A673 (cell line): ENCODE measurements at regions of chr10 and their contacts with region 1.

Region 1: DNA sequence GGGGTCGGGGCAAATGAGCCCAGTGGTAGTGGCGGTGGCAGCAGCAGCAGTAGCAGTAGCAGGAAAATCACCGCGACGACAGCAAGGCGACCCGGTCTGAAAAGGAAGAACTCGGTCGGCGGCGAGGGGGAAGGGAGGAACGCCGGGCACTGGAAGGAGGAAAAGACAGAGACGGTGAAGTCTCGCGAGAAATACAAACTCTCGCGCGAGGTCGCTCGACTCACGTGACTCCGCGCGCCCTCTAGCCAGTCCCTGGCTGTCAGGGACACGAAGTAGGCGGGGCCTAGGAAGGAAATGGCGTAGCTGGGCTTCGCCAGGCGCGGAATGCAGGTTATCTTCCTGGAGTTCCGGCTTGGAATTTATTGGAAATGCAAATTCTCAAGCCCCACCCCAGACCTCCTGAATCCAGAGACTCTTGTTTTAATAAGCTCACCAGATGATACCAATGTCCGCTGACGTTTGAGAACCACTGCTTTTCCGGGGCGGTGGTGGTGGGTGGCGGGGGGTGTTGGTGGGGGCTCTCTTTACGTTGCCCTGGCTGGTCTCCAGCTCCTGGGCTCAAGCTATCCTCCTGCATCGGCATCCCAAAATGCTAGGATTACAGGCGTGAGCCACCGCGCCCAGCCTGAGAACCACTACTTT is at the start of gene SMNDC1:
- DNase-seq: peak; percentile 99
- H3K4me3 ChIP-seq: peak within 1 kb of the TSS; percentile 81
- H3K27ac ChIP-seq: peak within 1 kb of the TSS; percentile 95
- H3K4me1 ChIP-seq: peaks cover 68% of the 10 kb centered on the region
- H3K27me3 ChIP-seq: no peaks in the 10 kb centered on the region
- CTCF ChIP-seq: no peak
- total RNA-seq, gene SMNDC1: 53.1 and 57.8 TPM in 2 replicates

Region 2: DNA sequence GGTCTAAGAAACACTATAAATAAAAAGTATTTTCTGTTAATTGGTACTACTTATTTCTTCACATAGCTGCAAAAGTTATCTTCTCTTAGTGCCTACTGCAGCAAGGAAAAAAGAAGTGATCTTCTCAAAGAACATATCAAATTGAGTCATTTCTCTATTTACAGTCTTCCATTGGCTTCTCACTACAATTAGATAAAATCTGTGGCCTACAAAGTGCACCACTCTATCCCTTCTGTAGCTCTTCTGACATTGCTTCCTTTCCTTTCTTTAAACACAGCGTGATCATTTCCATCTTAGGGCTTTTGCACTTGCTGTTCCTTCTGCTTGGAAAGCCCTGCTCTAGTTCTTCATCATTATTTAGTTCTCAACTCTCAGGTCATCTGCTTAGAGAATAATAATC is 52.8 kb before region 1 on chr10:
- CTCF ChIA-PET with region 1: no interaction called
- POLR2A ChIA-PET with region 1: no interaction called
- intact Hi-C with region 1: no loop called
- DNase-seq: peak; percentile 25
- H3K4me3 ChIP-seq: no peak overlapping the region
- H3K27ac ChIP-seq: peak overlapping the region; percentile 9
- H3K4me1 ChIP-seq: peaks cover 11% of the 10 kb centered on the region
- H3K27me3 ChIP-seq: no peaks in the 10 kb centered on the region
- CTCF ChIP-seq: no peak

Region 3: GRCh38 chr10:110446954-110447608 is 142.2 kb after region 1 on chr10:
- CTCF ChIA-PET with region 1: no interaction called
- POLR2A ChIA-PET with region 1: no interaction called
- intact Hi-C with region 1: no loop called
- DNase-seq: peak; percentile 60
- H3K4me3 ChIP-seq: no peak overlapping the region
- H3K27ac ChIP-seq: no peak overlapping the region
- H3K4me1 ChIP-seq: peaks cover 2% of the 10 kb centered on the region
- H3K27me3 ChIP-seq: no peaks in the 10 kb centered on the region
- CTCF ChIP-seq: no peak

Region 4: DNA sequence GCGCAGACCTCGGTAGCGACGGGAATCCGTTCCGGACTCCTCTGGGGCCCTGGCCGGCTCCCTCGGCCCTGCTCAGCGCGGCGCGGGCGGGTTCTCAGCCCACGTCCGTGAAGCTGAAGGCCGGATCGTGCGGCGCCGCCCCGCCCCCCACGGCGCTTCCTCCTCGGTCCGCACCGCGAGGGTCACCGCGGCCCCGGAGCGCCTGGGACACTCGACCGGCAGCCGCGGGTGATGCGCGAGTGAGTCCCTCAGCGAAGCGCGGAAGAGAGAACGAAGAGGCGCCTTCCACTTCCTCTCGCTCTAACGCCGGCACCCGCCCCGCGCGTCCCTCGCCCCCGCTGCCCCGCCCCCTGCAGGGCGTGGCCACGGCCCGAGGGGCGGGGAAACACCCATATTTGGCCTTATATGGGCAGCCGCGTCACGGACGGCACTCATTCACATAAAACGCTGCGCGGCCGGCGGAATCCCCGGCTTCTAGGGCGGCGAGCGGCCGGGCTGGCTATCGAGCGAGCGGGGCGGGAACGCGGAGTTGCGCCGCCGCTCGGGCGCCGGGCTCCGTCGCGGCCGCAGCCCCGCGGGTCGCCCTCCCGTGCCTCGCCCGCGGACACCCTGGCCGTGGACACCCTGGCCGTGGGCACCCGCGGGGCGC is 192.7 kb after region 1 on chr10 and contains the start of gene DUSP5:
- CTCF ChIA-PET with region 1: no interaction called
- POLR2A ChIA-PET with region 1: no interaction called
- intact Hi-C with region 1: loop called (anchors 5 kb)
- DNase-seq: peak; percentile 98
- H3K4me3 ChIP-seq: peak within 1 kb of the TSS; percentile 69
- H3K27ac ChIP-seq: peak within 1 kb of the TSS; percentile 89
- H3K4me1 ChIP-seq: peaks cover 35% of the 10 kb centered on the region
- H3K27me3 ChIP-seq: no peaks in the 10 kb centered on the region
- CTCF ChIP-seq: no peak
- total RNA-seq, gene DUSP5: 23.2 and 29.3 TPM in 2 replicates

Region 5: DNA sequence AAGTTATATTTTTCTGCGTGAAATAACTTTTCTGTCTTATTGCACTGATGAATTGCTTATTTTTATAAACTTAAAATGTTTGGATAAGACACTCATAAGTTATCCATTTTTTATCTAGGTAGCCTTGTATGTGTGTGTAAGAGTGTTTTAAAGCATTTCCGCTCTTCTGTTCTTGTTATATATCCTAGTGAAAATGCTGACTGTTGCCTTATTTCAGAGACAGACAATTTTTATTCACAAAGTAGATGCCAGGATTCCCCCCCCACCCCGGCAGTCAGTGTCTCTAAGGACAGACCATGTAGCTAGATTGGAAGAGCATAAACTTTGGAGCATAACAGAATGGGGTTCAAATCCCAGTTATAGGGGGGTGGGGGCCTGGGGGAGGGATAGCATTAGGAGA is 264.2 kb after region 1 on chr10:
- CTCF ChIA-PET with region 1: interaction called, 10 read pairs
- POLR2A ChIA-PET with region 1: no interaction called
- intact Hi-C with region 1: no loop called
- DNase-seq: no peak
- H3K4me3 ChIP-seq: peak overlapping the region; percentile 98
- H3K27ac ChIP-seq: no peak overlapping the region
- H3K4me1 ChIP-seq: peaks cover 41% of the 10 kb centered on the region
- H3K27me3 ChIP-seq: no peaks in the 10 kb centered on the region
- CTCF ChIP-seq: no peak

Region 6: GRCh38 chr10:110871298-110872084 is 566.6 kb after region 1 on chr10 and contains the start of gene PDCD4:
- CTCF ChIA-PET with region 1: no interaction called
- POLR2A ChIA-PET with region 1: no interaction called
- intact Hi-C with region 1: loop called (anchors 5 kb)
- DNase-seq: peak; percentile 99
- H3K4me3 ChIP-seq: peak within 1 kb of the TSS; percentile 87
- H3K27ac ChIP-seq: peak within 1 kb of the TSS; percentile 89
- H3K4me1 ChIP-seq: peaks cover 3% of the 10 kb centered on the region
- H3K27me3 ChIP-seq: no peaks in the 10 kb centered on the region
- CTCF ChIP-seq: no peak
- total RNA-seq, gene PDCD4: 17.3 and 23.7 TPM in 2 replicates

Region 7: DNA sequence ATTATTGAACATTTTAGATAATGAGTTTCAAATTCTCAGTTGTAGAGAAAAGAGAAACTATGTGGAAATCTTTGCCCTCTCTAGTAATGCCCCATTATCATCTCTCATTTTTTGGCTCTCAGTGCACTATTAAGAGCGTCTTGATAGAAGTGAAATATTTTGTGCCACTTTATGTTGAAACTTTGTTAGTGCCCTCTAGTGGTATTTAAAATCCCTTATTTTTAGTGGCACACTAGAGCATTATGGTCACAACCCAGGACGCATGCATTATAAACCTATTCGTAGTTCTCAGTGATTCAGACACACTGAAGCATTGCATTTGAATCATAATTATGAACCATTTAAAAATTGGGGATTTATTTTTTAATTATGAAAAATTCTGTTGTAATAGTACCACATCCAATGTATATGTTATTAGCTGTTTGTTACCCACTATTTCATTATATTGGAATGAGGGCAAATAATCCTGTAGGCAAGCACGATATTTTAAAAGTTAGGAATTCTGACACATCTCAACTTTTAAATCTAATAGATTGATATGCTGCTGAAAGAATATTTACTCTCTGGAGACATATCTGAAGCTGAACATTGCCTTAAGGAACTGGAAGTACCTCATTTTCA is 588.8 kb after region 1 on chr10:
- CTCF ChIA-PET with region 1: no interaction called
- POLR2A ChIA-PET with region 1: no interaction called
- intact Hi-C with region 1: loop called (anchors 5 kb)
- DNase-seq: peak; percentile 76
- H3K4me3 ChIP-seq: no peak overlapping the region
- H3K27ac ChIP-seq: no peak overlapping the region
- H3K4me1 ChIP-seq: peaks cover 4% of the 10 kb centered on the region
- H3K27me3 ChIP-seq: no peaks in the 10 kb centered on the region
- CTCF ChIP-seq: peak; percentile 67

Region 8: DNA sequence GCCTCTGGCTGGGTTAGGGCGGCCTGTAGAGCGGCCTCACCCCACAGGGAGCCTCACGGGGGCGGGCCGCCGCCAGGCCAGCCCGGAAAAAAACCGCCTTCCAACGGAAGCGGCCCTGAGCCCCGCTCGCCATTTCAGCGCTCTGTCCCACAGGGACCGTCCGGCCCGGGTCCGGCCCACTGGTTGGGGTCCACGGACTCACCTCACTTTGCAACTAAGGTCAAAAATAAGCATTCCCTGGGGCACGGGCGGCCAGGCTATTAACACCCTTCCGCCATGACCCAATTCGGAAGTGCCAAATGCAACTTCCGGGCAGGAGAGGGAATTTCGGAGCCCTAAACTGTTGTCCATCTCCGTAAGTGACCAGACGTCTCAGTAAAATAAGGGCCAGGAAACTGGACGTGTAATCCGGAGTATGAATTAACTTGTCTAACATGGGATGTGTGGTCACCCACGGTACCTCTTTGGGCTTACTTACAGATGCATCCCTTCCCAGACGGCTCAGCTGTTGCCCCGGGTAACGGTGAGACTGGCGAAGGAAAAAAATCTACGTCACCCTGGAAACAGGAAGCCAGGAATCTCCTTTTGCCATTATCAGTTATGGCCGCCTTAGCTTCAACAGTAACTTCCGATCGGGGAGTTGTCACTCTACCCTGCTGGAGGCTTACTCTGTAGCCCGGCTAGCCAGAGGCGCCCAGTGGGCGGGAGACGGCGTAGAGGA is 613.9 kb after region 1 on chr10 and contains the start of gene BBIP1:
- CTCF ChIA-PET with region 1: no interaction called
- POLR2A ChIA-PET with region 1: no interaction called
- intact Hi-C with region 1: loop called (anchors 10 kb)
- DNase-seq: peak; percentile 100
- H3K4me3 ChIP-seq: peak within 1 kb of the TSS; percentile 71
- H3K27ac ChIP-seq: peak within 1 kb of the TSS; percentile 94
- H3K4me1 ChIP-seq: peaks cover 44% of the 10 kb centered on the region
- H3K27me3 ChIP-seq: no peaks in the 10 kb centered on the region
- CTCF ChIP-seq: no peak
- total RNA-seq, gene BBIP1: 32.9 and 33.9 TPM in 2 replicates